Activated T-helper 1 cell treated with anti-CD3 and anti-CD28 coated beads, Interleukin-12 subunit alpha, Interleukin-12 subunit beta, Interleukin-2, Interleukin-4 antibody, amounts not matched to agents 30 ng/mL and 10 ng/mL and 1 ng/mL, durations not matched to agents 14 hours and 24 hours and 36 hours (primary cell): ENCODE measurements at regions of chr19 and their contacts with region 1.

Region 1: GRCh38 chr19:16542045-16542909 is at the start of gene CHERP:
- DNase-seq: peak; percentile 94
- H3K4me3 Mint-ChIP-seq: peak within 1 kb of the TSS; percentile 95
- H3K27ac Mint-ChIP-seq: peak within 1 kb of the TSS; percentile 94
- H3K4me1 Mint-ChIP-seq: peaks cover 38% of the 10 kb centered on the region
- H3K27me3 Mint-ChIP-seq: no peaks in the 10 kb centered on the region
- total RNA-seq, gene CHERP: 84.3 and 92.0 TPM in 2 replicates

Region 2: GRCh38 chr19:15125232-15126067 is 1416.8 kb before region 1 on chr19:
- intact Hi-C with region 1: loop called (anchors 5 kb)
- DNase-seq: peak; percentile 97
- H3K4me3 Mint-ChIP-seq: peak overlapping the region; percentile 91
- H3K27ac Mint-ChIP-seq: peak overlapping the region; percentile 98
- H3K4me1 Mint-ChIP-seq: peaks cover 37% of the 10 kb centered on the region
- H3K27me3 Mint-ChIP-seq: no peaks in the 10 kb centered on the region

Region 3: DNA sequence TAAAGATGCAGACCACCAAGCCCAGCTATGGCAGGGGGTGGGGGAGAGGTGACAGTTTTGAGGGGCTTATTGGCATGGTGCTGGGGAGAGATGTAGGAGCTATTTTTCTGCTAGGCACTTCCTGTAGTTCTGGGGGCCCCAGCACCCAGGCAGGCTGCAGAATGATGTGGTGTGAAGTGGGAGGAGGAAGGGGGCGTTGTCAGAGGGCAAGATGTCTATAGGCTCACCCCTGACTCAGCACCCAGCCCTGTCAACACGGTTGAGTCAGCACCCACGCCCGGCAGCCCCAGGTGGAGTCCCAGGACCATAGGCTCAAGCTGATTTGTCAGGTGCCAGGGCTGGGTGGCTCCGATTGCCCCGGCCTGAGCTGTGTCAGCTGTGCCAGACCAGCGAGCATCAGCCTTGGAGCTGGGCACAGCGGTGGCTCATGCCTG is 211.9 kb before region 1 on chr19:
- intact Hi-C with region 1: loop called (anchors 1 kb)
- DNase-seq: peak; percentile 89
- H3K4me3 Mint-ChIP-seq: peak overlapping the region; percentile 93
- H3K27ac Mint-ChIP-seq: peak overlapping the region; percentile 79
- H3K4me1 Mint-ChIP-seq: peaks cover 67% of the 10 kb centered on the region
- H3K27me3 Mint-ChIP-seq: peaks cover 9% of the 10 kb centered on the region

Region 4: GRCh38 chr19:16495982-16496612 is 46.2 kb before region 1 on chr19 and contains the starts of genes C19orf44 and CALR3:
- intact Hi-C with region 1: loop called (anchors 1 kb)
- DNase-seq: peak; percentile 98
- H3K4me3 Mint-ChIP-seq: peak within 1 kb of the TSS; percentile 93
- H3K27ac Mint-ChIP-seq: peak within 1 kb of the TSS; percentile 87
- H3K4me1 Mint-ChIP-seq: peaks cover 9% of the 10 kb centered on the region
- H3K27me3 Mint-ChIP-seq: no peaks in the 10 kb centered on the region
- total RNA-seq, gene C19orf44: 4.4 and 5.6 TPM in 2 replicates
- total RNA-seq, gene CALR3: not detected in 2 replicates

Region 5: GRCh38 chr19:16509141-16510061 is 32.9 kb before region 1 on chr19:
- intact Hi-C with region 1: no loop called
- DNase-seq: no peak
- H3K4me3 Mint-ChIP-seq: no peak overlapping the region
- H3K27ac Mint-ChIP-seq: no peak overlapping the region
- H3K4me1 Mint-ChIP-seq: no peaks in the 10 kb centered on the region
- H3K27me3 Mint-ChIP-seq: no peaks in the 10 kb centered on the region

Region 6: GRCh38 chr19:16584248-16585141 is 42.2 kb after region 1 on chr19:
- intact Hi-C with region 1: loop called (anchors 1 kb)
- DNase-seq: peak; percentile 88
- H3K4me3 Mint-ChIP-seq: peak overlapping the region; percentile 87
- H3K27ac Mint-ChIP-seq: peak overlapping the region; percentile 90
- H3K4me1 Mint-ChIP-seq: peaks cover 73% of the 10 kb centered on the region
- H3K27me3 Mint-ChIP-seq: no peaks in the 10 kb centered on the region

Region 7: DNA sequence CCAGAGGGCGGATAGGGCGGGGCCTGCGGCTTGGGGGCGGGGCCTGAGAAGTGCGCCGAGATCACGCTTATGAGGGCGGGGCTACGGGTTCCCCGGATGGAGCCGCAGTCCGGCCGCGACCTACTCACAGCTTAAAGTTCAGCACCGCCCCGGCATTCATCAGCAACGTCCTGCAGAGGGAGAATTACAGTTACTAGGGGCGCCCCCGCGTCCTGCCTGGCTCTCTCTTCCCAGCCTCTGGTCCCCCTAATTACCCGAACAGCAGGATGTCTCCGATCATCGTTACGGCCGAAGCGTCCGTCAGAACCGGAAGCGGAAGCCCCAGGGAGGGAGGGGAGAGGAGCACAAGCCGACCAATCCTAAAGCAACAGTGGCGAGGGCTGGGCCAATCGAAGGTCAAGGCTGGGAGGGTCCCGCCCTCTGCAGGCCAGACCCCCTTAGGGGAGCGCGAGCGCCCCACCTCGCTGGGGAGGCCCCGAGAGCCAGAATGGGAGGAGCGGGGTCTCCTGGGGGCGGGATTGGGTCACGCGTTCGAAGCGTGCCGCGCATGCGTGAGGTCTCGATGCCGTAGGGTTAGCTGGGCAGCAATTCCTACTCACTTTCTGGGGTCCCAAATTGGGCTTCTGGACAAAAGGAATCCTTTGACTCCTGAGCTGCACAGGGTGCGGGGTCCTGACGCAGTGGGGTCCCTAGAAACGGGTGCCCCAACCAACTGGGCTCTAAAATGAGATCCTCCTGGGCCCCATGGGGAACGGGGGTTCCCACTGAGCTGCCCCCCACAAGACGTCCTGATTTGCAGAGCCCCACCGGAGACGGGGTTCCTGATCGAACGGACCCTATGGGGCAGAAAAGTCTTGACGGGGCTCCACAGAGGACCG is 117.8 kb after region 1 on chr19 and contains the start of gene SMIM7:
- intact Hi-C with region 1: loop called (anchors 1 kb)
- DNase-seq: peak; percentile 98
- H3K4me3 Mint-ChIP-seq: peak within 1 kb of the TSS; percentile 94
- H3K27ac Mint-ChIP-seq: peak within 1 kb of the TSS; percentile 97
- H3K4me1 Mint-ChIP-seq: peaks cover 27% of the 10 kb centered on the region
- H3K27me3 Mint-ChIP-seq: peaks cover 13% of the 10 kb centered on the region
- total RNA-seq, gene SMIM7: 69.3 and 72.7 TPM in 2 replicates